Posterior cingulate gyrus (tissue), 11 donors: ENCODE measurements at regions of chrX and their contacts with region 1.

Region 1: DNA sequence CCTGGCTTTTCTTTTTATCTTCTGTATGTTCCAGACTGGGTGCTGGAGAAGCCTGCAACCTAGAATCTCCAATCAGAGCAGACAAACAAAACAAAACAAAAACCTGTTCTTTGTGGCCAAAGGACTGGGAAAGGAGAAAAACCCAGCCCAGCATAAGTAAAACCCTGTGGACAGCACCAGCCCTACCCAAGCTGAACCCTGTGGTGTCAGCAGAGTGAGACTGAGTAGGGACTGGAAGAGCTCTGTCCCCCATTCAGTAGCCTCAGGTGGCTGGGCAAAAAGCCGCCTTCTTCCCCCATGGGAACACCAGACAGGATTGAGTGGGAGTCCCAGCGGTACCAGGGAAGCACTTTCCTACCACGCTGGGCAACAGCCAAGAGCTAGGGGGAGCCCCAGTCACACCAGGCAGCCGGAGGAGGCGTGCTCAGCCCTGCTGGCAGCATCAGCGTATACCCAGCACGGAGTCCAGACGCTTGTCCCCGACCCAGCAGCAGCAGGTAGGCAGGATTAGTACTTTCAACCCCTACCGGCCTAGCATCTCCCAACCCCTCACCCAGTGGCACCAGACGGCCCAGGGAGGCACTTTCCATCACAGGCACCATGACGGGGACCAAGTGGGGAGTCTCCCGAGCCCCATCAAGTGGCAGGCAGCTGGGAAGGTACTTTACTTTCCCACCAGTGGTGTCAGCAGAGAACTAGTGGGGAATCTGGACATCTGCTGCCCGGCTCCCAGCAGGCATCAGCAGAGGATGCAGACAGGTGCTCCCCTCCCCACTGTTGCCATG is 8.6 kb upstream of the JADE3 start:
- DNase-seq: peak; percentile 67 to 97 (median 83)

Region 2: GRCh38 chrX:47030339-47030738 is 126.7 kb after region 1 on chrX:
- intact Hi-C with region 1: loop called (anchors 2 kb)
- DNase-seq: no peak

Region 3: GRCh38 chrX:47093248-47093647 is 189.6 kb after region 1 on chrX:
- intact Hi-C with region 1: loop called (anchors 5 kb)
- DNase-seq: peak in 1 of 10 donors; percentile 10